Right ventricle myocardium inferior (tissue), 1 donor: ENCODE measurements at regions of chr6 and their contacts with region 1.

Region 1: DNA sequence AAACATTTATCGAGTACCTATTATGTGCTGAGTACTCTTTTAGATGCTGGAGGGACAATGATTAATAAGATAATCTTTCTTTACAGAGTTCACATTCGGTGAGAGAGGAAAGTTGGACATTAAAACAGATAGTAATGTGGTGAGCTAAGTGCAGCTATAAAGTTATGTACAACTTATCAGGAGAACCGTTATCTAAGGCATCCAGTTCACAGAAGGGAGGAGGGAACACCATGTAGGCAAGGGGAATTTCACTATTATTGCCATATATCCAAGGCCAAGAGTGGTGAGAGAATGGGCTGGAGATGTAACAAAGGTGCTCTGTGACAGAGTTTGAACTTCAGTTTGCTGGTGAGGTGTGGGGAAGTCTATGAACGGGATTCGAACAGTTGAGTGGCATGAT is 105.8 kb downstream of the CARMIL1 start:
- DNase-seq: no peak
- ATAC-seq: no peak

Region 2: GRCh38 chr6:25027221-25027916 is 357.6 kb before region 1 on chr6:
- intact Hi-C with region 1: loop called (anchors 5 kb)
- DNase-seq: no peak
- ATAC-seq: no peak

Region 3: GRCh38 chr6:25537349-25538018 is 152.5 kb after region 1 on chr6:
- intact Hi-C with region 1: no loop called
- DNase-seq: no peak
- ATAC-seq: no peak